Psoas muscle (tissue), 8 donors: ENCODE measurements at regions of chr7 and their contacts with region 1.

Region 1: GRCh38 chr7:44455155-44455554 is 35.3 kb downstream of the NUDCD3 start:
- DNase-seq: no peak
- ATAC-seq: no peak
- H3K4me3 ChIP-seq: no peak overlapping the region
- H3K27ac ChIP-seq: no peak overlapping the region
- H3K4me1 ChIP-seq: peaks cover 24% of the 10 kb centered on the region
- H3K27me3 ChIP-seq: no peaks in the 10 kb centered on the region
- CTCF ChIP-seq: no peak

Region 2: DNA sequence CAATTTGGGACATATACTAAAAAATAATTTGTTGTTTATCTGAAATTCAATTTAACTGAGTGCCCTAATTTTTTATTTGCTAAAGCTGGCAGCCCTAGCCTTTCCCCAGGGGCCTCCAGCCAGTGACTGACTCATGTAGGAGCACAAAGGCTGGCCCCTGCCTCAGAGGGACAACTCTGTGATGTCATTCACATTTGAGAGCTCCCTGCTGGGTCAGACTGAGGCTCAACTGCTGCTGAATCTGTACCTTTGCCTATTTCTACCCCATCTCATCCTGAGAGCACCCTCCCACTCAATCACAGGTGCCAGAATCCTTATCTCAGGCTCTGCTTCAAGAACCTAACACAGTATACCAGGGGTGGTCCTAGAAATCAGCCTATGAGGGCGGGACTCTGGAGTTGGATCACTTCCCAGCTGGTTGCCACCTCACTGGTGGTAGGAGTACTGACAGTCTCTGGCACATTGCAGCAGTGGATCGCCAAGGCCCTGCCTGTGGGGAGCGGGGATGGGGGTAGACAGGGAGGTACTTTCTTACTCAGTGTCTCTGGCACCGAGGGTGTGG is 277.5 kb before region 1 on chr7:
- intact Hi-C with region 1: loop called in 1 of 2 experiments (anchors 5 kb)
- DNase-seq: no peak
- ATAC-seq: no peak
- H3K4me3 ChIP-seq: no peak overlapping the region
- H3K27ac ChIP-seq: no peak overlapping the region
- H3K4me1 ChIP-seq: no peaks in the 10 kb centered on the region
- H3K27me3 ChIP-seq: peaks cover 0 to 2% (median 0%) of the 10 kb centered on the region in 3 donors
- CTCF ChIP-seq: no peak